HAP-1 (cell line): ENCODE measurements at regions of chr13 and their contacts with region 1.

Region 1: DNA sequence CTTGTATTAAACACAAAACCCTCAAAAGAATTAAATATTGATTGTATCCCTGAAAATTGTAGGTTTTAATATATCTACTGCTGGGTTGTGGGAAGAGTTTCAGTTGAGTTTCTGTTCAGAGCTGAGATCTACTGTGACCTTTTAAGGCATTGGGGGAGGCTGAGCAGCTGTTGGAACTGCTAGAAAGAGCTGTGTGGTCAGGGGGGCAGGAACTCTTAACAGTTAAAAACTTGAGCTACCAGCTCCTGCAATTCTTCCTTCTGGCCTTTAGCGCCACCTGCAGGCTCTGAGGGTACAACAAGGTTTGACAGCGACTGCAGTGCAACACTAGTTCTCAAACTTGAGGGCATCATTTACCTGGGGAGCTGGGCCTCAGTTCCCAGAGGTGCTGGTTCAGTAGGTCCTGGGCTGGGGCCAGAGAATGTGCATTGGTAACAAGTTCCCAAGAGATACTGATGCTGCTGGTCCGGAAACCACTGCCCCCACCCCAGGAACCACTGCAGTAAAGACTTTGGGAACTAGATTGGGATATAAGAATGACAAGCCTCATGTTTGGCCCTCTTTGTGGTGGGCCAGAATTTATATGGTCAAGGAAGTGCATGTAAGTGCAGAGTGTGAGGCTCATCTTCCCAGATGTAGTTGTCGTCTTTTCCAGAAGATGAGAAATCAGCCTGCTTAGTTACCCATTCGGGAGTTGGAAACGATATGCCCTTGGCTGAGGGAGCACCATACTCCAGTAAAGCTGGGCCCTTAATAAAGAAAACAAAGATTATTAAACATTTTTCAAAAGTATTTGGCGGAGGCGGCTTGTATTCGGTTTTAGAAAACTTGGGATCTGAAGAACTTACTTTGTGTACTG is 2.6 kb downstream of the RNASEH2B start:
- DNase-seq: peak; percentile 90 to 95
- H3K4me3 ChIP-seq: peak overlapping the region; percentile 56
- H3K4me1 ChIP-seq: peaks cover 10% of the 10 kb centered on the region
- H3K27me3 ChIP-seq: no peaks in the 10 kb centered on the region

Region 2: DNA sequence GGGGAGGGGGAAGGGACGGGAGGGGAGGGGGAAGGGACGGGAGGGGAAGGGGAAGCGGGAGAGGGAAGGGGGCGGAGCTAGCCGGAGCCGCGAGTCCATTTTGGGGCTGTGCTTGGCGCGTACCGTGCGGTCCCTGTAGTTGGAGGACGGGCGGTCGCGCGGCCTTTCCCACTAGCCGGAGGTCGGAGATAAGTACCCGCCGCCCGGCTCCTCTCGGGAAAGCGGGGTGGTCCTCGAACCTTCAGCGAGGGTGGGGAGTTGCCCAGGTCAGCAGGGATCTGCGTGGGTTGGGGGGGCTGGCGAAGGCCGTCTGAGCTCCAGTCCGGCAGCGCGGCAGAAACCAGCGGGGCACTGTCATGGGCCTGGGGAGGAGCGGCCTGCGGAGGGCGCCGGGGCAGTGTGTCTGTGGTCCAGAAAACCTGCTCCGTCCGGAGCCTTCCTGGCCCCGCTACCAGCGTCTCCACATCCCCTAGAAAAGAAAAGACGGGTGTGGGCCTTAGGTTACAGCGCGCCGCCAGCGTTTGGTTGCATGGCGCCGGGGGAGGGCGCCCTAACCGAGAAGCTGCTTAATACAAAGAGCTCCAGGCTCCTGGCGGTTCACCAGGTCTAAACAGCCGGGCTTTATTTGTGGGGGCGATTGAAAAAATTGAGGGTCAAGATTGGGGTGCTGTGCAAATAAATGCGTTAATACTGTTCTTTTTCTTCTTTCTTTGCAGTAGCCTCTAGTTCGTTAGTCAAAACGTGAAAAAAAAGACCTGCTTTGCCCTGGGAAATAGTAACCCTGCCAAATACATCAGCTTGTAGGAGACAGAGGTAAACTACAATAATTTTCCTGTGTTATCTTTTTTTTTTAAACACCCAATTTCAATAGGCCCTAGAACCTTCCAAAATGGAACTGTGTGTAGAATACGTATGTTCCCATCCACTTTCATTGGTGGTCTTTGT is 914.9 kb before region 1 on chr13 and contains the start of gene TRIM13:
- in situ Hi-C with region 1: loop called (anchors 25 kb)
- DNase-seq: peak; percentile 80 to 88
- H3K4me3 ChIP-seq: peak within 1 kb of the TSS; percentile 95
- H3K4me1 ChIP-seq: peaks cover 27% of the 10 kb centered on the region
- H3K27me3 ChIP-seq: no peaks in the 10 kb centered on the region

Region 3: DNA sequence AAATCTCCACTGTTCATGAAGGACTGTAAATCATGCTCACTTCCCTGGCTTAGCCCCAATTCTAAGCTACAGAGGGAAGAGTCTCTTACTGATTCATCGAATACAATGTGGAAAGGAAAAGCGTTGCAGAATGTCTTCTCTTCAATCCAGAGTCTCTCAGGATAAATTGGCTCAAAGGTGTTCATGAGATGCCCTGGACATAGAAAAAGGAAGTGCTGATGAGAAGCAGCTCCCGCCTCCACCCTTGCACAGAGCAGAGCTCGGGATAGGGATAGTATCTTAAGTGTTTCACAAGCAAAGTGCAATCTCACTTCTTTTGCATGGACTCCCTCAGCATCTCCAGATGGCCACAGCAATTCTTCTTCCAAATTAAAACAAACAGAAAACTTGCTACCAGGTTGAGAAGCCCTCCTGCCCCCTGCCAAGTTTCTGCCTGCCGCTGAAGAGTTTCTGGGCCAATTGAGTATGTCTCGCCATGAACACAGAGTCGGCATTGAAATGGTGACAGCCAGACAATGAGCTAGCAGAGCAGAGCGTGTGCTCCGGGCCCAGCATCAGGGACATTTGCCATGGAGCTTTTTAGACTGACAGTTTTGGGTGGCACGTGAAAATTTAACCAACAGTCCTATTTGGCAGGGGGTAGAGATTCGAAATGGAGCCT is 113.2 kb after region 1 on chr13:
- in situ Hi-C with region 1: no loop called
- DNase-seq: no peak
- H3K4me3 ChIP-seq: no peak overlapping the region
- H3K4me1 ChIP-seq: no peaks in the 10 kb centered on the region
- H3K27me3 ChIP-seq: peaks cover 10% of the 10 kb centered on the region